PC-9 (cell line): ENCODE measurements at regions of chr10 and their contacts with region 1.

Region 1: DNA sequence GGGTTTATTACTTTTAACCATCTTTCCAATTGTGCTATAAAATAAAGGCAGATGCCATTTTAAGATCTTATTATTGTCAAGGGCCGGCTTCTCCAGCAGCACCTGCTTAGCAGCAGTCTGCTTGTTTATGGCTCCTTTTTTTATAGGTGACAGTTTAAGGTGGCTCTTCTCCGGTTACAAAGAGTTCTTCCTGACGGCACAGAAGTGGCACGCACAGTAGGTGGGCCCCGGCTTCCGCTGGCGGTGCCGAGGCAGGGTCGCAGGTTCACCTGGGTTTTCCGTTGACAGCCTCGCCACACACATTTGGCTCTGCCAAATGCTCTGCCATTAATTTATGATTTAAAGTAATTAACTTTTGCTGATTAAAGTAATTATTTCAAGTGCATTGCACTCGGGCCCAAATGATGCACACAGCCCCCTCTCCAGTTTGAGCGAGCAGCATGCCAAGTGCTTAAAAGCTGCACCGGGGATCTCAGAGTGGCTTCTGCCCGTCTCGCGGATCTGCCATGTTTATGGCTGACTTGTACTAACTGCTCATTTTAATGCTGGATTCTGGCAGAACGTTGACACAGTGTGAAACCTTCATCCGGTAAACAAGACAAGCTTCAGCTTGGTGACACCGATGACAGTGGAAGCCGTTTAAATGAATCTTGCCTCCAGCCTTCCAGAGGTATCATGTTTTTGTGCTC is 355.1 kb upstream of the MKI67 start:
- DNase-seq: no peak
- H3K4me3 ChIP-seq: no peak overlapping the region
- H3K27ac ChIP-seq: no peak overlapping the region
- H3K4me1 ChIP-seq: no peaks in the 10 kb centered on the region
- H3K27me3 ChIP-seq: peaks cover 56% of the 10 kb centered on the region
- CTCF ChIP-seq: no peak

Region 2: GRCh38 chr10:127977357-127978009 is 503.8 kb before region 1 on chr10:
- CTCF ChIA-PET with region 1: no interaction called
- POLR2A ChIA-PET with region 1: no interaction called
- intact Hi-C with region 1: no loop called
- DNase-seq: peak; percentile 55 to 58
- H3K4me3 ChIP-seq: no peak overlapping the region; the same call in 1 of the 2 replicates
- H3K27ac ChIP-seq: peak overlapping the region; percentile 60
- H3K4me1 ChIP-seq: peaks cover 25% of the 10 kb centered on the region
- H3K27me3 ChIP-seq: no peaks in the 10 kb centered on the region
- CTCF ChIP-seq: no peak

Region 3: DNA sequence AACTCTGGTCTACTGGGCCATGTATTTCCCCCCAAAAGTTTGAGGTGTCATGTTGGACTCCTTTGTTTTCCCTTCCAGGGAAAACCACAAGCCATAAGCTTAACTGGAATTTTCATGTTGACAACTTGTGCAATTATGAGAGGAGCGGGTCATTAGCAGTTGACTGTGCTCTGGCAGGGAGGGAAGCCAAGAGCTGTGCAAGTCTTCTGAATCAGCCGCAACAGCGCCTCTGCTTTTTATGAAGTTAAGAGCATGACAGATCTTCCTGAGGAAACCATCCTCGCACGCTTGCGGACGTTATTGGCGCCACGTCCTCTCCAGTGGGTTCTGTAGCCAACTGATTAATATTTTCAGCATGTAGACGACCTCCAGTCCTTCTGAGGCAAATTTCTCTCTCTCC is 206.4 kb before region 1 on chr10:
- CTCF ChIA-PET with region 1: no interaction called
- POLR2A ChIA-PET with region 1: interaction called, 22 read pairs
- intact Hi-C with region 1: no loop called
- DNase-seq: no peak
- H3K4me3 ChIP-seq: no peak overlapping the region
- H3K27ac ChIP-seq: no peak overlapping the region
- H3K4me1 ChIP-seq: no peaks in the 10 kb centered on the region
- H3K27me3 ChIP-seq: peaks cover 49% of the 10 kb centered on the region; the same call in 1 of the 2 replicates
- CTCF ChIP-seq: no peak